Activated CD8-positive, alpha-beta memory T cell treated with anti-CD3 and anti-CD28 coated beads, Interleukin-2, amount 10 ng/mL, durations not matched to agents 7 days and 5 days (primary cell): ENCODE measurements at regions of chr2 and their contacts with region 1.

Region 1: DNA sequence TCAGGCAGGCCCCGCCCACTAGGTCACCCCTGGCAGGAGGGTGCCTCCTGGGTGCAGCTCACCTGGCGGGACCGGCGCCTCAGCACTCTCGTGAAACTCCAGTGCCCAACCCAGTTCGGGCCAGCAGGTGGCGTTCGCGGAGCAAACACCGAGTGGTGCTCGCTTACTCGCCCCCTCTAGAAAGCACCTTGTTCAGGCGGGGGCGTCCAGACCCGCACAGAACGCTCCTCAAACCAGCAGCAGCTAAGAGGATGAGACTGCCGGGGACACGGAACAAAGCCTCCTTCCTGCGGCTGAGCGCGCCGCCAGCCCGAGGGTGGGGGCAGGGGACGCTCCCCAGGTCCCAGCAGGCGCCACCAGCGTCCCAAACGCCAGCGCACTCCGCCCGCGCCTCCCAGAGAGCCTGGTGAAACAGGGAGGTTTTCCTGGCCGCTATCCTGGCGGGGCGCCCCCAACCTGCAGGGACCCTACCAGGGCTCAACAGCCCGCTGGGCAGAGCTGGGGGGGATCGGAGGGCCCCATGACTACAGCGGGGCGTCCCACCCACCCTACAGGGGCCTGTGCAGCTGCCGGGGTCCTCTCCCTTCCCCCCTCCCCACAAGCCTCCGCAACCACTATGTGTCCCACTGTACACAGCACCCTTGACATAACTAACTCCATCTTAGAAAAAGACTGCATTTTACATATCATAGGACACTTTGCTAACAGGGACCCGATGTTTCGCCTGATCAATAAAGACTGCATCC is 44.7 kb downstream of the MRPS5 start:
- DNase-seq: peak; percentile 93
- ATAC-seq: peak; percentile 80
- H3K4me3 Mint-ChIP-seq: peak overlapping the region; percentile 67
- H3K27ac Mint-ChIP-seq: peak overlapping the region; percentile 90
- H3K4me1 Mint-ChIP-seq: peaks cover 75% of the 10 kb centered on the region
- H3K27me3 Mint-ChIP-seq: peaks cover 4% of the 10 kb centered on the region

Region 2: DNA sequence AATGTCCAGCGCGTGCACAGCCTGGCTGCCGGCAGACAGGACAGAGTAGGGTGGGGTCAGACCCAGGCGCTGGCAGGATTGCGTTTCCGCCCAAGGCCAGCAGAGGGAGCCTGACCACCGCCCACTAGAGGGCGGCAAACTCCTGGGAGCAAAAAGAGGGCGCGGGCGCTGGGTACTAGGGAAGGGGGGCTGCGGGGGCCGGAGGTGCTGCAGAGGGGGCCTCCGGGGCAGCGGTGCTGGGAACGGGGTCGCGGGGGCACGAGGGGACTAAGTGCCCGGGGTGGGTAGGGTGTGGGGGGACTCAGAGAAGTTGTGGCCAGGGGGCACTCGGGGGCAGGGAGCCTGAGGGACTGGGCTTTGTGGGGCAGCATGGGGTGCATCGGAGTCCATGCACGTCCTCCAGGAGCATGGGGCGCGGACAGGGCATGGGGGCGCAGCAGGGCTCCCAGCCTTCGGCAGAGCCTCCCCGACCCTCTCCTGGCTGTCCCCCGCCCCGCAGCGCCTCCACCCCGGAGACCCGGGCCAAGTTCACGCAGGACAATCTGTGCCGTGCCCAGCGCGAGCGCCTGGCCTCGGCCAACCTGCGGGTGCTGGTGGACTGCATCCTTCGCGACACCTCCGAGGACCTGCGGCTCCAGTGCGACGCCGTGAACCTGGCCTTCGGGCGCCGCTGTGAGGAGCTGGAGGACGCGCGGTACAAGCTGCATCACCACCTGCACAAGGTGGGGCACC is 202.5 kb before region 1 on chr2:
- CTCF ChIA-PET with region 1: no interaction called
- DNase-seq: peak; percentile 73
- ATAC-seq: peak; percentile 82
- H3K4me3 Mint-ChIP-seq: no peak overlapping the region
- H3K27ac Mint-ChIP-seq: no peak overlapping the region
- H3K4me1 Mint-ChIP-seq: no peaks in the 10 kb centered on the region
- H3K27me3 Mint-ChIP-seq: peaks cover 10% of the 10 kb centered on the region

Region 3: GRCh38 chr2:95022309-95023221 is 54.4 kb before region 1 on chr2:
- CTCF ChIA-PET with region 1: interaction called, 414 read pairs
- DNase-seq: peak; percentile 88
- ATAC-seq: peak; percentile 66
- H3K4me3 Mint-ChIP-seq: no peak overlapping the region
- H3K27ac Mint-ChIP-seq: peak overlapping the region; percentile 71
- H3K4me1 Mint-ChIP-seq: peaks cover 42% of the 10 kb centered on the region
- H3K27me3 Mint-ChIP-seq: peaks cover 31% of the 10 kb centered on the region

Region 4: DNA sequence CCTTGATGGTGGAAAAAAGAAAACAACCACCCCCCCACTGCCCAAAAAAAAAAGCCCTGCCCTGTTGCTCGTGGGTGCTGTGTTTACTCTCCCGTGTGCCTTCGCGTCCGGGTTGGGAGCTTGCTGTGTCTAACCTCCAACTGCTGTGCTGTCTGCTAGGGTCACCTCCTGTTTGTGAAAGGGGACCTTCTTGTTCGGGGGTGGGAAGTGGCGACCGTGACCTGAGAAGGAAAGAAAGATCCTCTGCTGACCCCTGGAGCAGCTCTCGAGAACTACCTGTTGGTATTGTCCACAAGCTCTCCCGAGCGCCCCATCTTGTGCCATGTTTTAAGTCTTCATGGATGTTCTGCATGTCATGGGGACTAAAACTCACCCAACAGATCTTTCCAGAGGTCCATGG is 23.4 kb before region 1 on chr2:
- CTCF ChIA-PET with region 1: interaction called, 77 read pairs
- DNase-seq: no peak
- ATAC-seq: no peak
- H3K4me3 Mint-ChIP-seq: no peak overlapping the region
- H3K27ac Mint-ChIP-seq: no peak overlapping the region
- H3K4me1 Mint-ChIP-seq: peaks cover 48% of the 10 kb centered on the region
- H3K27me3 Mint-ChIP-seq: no peaks in the 10 kb centered on the region

Region 5: DNA sequence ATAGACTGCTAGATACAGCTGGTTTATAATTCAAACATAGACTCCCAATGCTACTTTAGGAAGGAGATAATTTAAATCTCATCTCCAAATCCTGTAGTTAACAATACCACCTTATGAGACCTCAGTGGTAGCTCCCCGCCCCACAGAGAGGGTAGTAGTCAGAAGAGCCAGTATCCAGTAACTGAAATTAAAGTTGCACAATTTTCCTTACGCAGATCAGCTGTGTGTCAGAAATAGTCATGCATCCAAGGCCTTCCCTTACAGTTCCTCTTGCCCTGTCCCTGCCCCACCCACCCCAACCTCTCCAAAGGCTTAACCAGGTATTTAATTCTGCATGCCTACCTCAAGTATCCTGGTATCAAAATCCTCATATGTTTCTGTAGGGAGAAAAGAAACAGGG is 29.1 kb after region 1 on chr2:
- CTCF ChIA-PET with region 1: interaction called, 11 read pairs
- DNase-seq: no peak
- ATAC-seq: no peak
- H3K4me3 Mint-ChIP-seq: no peak overlapping the region
- H3K27ac Mint-ChIP-seq: no peak overlapping the region
- H3K4me1 Mint-ChIP-seq: no peaks in the 10 kb centered on the region
- H3K27me3 Mint-ChIP-seq: no peaks in the 10 kb centered on the region

Region 6: GRCh38 chr2:95121407-95122196 is 44.6 kb after region 1 on chr2 and contains the start of gene MRPS5:
- CTCF ChIA-PET with region 1: interaction called, 53 read pairs
- DNase-seq: peak; percentile 88
- ATAC-seq: peak; percentile 97
- H3K4me3 Mint-ChIP-seq: peak within 1 kb of the TSS; percentile 97
- H3K27ac Mint-ChIP-seq: peak within 1 kb of the TSS; percentile 89
- H3K4me1 Mint-ChIP-seq: peaks cover 38% of the 10 kb centered on the region
- H3K27me3 Mint-ChIP-seq: no peaks in the 10 kb centered on the region
- total RNA-seq, gene MRPS5: 80.0 to 82.7 TPM

Region 7: GRCh38 chr2:95323347-95324185 is 246.6 kb after region 1 on chr2:
- CTCF ChIA-PET with region 1: no interaction called
- DNase-seq: no peak
- ATAC-seq: no peak
- H3K4me3 Mint-ChIP-seq: no peak overlapping the region
- H3K27ac Mint-ChIP-seq: no peak overlapping the region
- H3K4me1 Mint-ChIP-seq: no peaks in the 10 kb centered on the region
- H3K27me3 Mint-ChIP-seq: no peaks in the 10 kb centered on the region